ENCODE measurements at regions of chr1 and their contacts with region 1.

Region 1: GRCh38 chr1:97989094-97989680 is 68.4 kb upstream of the DPYD start:
- DNase-seq: no peak
- H3K4me3 ChIP-seq: no peak overlapping the region
- H3K27ac ChIP-seq: no peak overlapping the region
- H3K4me1 ChIP-seq: peaks cover 17% of the 10 kb centered on the region
- H3K27me3 ChIP-seq: no peaks in the 10 kb centered on the region
- CTCF ChIP-seq: no peak
- POLR2A ChIP-seq: no peak

Region 2: DNA sequence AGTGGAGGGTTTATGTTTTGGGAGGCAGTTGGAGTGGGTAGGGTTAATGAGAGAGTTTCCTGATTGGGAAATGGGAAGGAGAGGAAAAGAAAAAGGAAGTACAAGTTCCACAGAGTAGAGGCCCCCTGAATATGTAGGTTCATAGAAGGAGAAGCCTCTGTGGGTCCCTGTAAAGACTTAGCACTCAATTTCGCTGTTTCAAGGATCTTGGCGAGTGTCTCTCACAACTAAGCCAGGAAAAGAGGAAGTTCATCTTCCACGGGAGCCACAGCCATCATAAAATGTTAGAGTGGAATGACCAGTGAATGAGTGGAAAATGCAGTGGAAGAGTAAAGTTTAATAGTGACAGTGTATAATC is 50.9 kb before region 1 on chr1:
- CTCF ChIA-PET with region 1: no interaction called
- POLR2A ChIA-PET with region 1: no interaction called
- dilution Hi-C with region 1: no loop called
- intact Hi-C with region 1: loop called (anchors 5 kb)
- DNase-seq: no peak
- H3K4me3 ChIP-seq: no peak overlapping the region
- H3K27ac ChIP-seq: peak overlapping the region; percentile 64
- H3K4me1 ChIP-seq: peaks cover 26% of the 10 kb centered on the region
- H3K27me3 ChIP-seq: no peaks in the 10 kb centered on the region
- CTCF ChIP-seq: no peak
- POLR2A ChIP-seq: no peak

Measured in endothelial cell of umbilical vein (primary cell).